ENCODE measurements at regions of chr5 and their contacts with region 1.

Region 1: GRCh38 chr5:71782771-71783770 is 64.0 kb downstream of the CARTPT start:
- ATAC-seq: peak; percentile 87 to 94 (median 88)
- H3K4me3 ChIP-seq: peak overlapping the region in 1 of 5 donors; percentile 8
- H3K27ac ChIP-seq: no peak overlapping the region
- H3K4me1 ChIP-seq: peaks cover 27 to 28% of the 10 kb centered on the region in 2 donors

Region 2: GRCh38 chr5:72018146-72018803 is 235.2 kb after region 1 on chr5:
- in situ Hi-C with region 1: loop called in 2 of 9 experiments (anchors 25 kb)
- ATAC-seq: peak in 3 of 8 experiments; percentile 14 to 56 (median 32)
- H3K4me3 ChIP-seq: no peak overlapping the region
- H3K27ac ChIP-seq: no peak overlapping the region
- H3K4me1 ChIP-seq: peaks cover 40 to 42% of the 10 kb centered on the region in 2 donors

Region 3: GRCh38 chr5:72079296-72079695 is 296.2 kb after region 1 on chr5:
- in situ Hi-C with region 1: loop called in 1 of 9 experiments (anchors 25 kb)
- ATAC-seq: peak; percentile 67 to 91 (median 84)
- H3K4me3 ChIP-seq: no peak overlapping the region
- H3K27ac ChIP-seq: no peak overlapping the region
- H3K4me1 ChIP-seq: peaks cover 23 to 46% of the 10 kb centered on the region in 2 donors

Region 4: GRCh38 chr5:72108202-72109061 is 325.4 kb after region 1 on chr5:
- in situ Hi-C with region 1: loop called in 3 of 9 experiments (anchors 25 kb)
- ATAC-seq: peak; percentile 37 to 65 (median 62)
- H3K4me3 ChIP-seq: peak overlapping the region; percentile 72 to 90 (median 75)
- H3K27ac ChIP-seq: peak overlapping the region; percentile 95 to 96
- H3K4me1 ChIP-seq: peaks cover 13 to 21% of the 10 kb centered on the region in 2 donors

Region 5: DNA sequence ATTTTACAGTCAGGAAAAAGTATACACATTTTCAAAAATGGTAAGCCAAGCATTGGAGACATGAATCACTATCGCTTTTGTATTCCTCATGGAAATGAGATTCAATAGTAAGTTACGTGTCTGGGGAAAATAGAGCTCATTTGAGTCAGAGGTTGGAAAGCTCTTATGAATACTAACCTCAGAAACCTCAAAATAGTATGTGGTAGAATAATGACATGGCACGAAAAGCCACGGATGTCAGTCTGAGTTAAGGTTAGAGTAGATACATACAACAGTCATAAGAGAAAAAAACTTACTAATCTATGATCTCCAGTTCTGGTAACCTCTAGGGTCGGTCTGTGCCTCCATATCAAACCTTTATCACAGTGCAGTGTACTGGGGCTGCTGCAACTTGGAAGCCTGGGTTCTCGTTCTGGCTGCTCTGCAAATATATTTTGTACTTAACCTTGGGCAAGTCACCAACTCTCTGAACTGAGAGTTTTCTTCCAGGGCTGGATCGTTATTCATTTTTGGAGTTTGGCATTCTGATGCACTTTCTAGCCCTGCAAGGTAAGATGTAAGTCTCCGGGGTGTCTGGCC is 356.0 kb after region 1 on chr5:
- in situ Hi-C with region 1: loop called in 1 of 9 experiments (anchors 25 kb)
- ATAC-seq: peak in 1 of 8 experiments; percentile 8
- H3K4me3 ChIP-seq: no peak overlapping the region
- H3K27ac ChIP-seq: no peak overlapping the region
- H3K4me1 ChIP-seq: peaks cover 58 to 59% of the 10 kb centered on the region in 2 donors

Region 6: DNA sequence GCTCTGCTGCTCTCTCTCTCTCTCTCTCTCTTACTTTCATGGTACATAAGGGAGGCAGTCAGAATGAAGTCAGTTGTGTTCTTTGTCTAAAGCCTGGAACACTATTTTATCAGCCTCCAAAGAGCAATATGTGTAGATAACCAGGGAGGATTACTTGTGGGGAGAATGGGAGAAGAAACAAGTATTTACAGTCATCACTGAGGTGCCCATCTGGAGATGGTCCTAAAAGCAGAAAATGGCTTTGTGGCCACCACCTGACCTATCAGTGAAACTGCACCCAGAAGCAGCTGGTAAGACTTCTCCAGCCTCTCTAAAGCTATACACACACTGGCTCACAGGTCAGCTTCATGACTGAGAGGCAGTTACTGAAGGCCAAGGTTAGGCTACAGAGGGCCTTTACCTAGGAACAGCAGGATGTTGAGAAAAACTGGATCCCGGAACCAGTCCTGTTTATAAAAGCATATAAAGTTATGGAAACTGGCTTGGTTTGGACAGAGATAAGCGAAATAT is 461.8 kb after region 1 on chr5:
- in situ Hi-C with region 1: loop called in 1 of 9 experiments (anchors 25 kb)
- ATAC-seq: peak; percentile 41 to 86 (median 52)
- H3K4me3 ChIP-seq: no peak overlapping the region
- H3K27ac ChIP-seq: no peak overlapping the region
- H3K4me1 ChIP-seq: peaks cover 39 to 52% of the 10 kb centered on the region in 2 donors

Region 7: DNA sequence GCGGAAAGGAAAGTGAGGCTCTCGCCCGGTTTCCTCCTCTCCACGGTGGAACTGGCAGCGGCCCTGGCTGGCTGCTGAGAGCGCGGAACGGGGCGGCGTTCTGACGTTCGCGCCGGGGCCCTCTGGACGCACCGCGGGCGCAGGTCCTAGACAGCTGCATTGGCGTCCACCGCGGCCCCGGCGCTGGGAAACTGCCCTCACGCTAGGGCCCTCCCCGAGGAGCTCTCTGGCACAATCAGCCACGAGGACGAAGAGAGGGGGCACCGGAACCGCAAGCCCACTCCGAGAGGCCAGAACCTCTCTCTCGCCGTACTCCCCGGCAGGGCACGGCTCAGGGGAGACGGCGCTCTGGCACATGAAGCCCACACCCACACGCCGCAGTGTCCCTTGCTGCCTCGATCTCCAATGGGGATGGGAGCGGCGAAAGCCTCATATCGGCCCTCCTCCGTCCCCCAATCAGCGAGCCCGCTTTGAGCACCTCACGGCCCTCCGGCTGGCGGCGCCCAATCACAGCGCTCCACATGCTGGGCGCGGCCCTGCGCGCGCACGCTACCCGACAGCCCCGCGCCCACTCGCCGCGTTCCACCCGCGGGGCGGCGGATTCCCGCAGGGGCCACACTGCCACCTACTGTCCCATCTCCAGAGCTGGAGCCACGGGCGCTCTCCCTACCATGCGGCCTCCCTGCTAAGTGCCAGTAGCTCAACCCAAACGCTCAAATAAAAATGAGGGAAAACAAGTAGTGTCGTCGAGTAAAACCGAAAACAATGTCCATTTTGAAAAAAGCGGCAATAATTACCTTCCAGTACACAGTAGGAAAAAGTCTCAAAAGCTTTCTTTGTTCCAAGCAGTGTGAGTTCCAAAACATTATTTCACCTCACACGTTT is 525.1 kb after region 1 on chr5:
- in situ Hi-C with region 1: loop called in 8 of 9 experiments (anchors 10 to 25 kb)
- ATAC-seq: peak; percentile 95 to 98 (median 97)
- H3K4me3 ChIP-seq: peak overlapping the region; percentile 43 to 69 (median 59)
- H3K27ac ChIP-seq: peak overlapping the region; percentile 78 to 88
- H3K4me1 ChIP-seq: peaks cover 9 to 15% of the 10 kb centered on the region in 2 donors

Measured in motor neuron (in vitro differentiated cells).